ENCODE measurements at regions of chr4 and their contacts with region 1.

Region 1: GRCh38 chr4:160319221-160319867 is 1216.5 kb downstream of the RAPGEF2 start:
- DNase-seq: no peak
- H3K4me3 ChIP-seq: no peak overlapping the region
- CTCF ChIP-seq: no peak
- POLR2A ChIP-seq: no peak

Region 2: GRCh38 chr4:158644760-158645159 is 1674.6 kb before region 1 on chr4:
- intact Hi-C with region 1: loop called (anchors 5 kb)
- DNase-seq: no peak
- H3K4me3 ChIP-seq: no peak overlapping the region
- CTCF ChIP-seq: no peak
- POLR2A ChIP-seq: no peak

Region 3: GRCh38 chr4:159352609-159353008 is 966.7 kb before region 1 on chr4:
- intact Hi-C with region 1: no loop called
- DNase-seq: no peak
- H3K4me3 ChIP-seq: no peak overlapping the region
- CTCF ChIP-seq: no peak
- POLR2A ChIP-seq: no peak

Region 4: DNA sequence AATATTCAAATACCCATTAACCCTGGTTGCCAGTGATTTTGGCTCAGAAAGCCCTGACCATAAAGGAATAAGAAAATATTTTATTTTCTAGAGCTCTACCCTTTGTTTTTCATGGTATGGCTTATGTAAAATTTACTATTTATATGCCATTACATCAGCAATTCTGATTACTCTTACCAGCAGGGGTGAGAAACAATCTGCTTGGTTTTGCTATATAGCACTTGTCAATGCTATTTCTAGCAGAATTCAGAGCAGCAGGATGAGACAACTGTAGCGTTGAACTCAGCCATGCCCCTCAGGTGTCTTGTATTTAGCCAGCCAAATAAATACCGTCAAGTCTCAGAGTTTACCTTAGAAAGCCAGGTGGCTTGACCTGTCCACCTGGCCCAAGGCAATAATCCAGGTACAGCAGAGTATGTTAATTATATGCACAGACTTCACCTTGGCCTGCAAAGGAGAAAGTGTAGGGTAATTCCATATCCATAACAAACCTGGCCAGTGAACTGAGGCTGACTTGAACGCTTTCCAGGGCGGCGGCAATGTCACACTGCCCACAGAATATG is 87.0 kb after region 1 on chr4:
- intact Hi-C with region 1: no loop called
- DNase-seq: no peak
- H3K4me3 ChIP-seq: no peak overlapping the region
- CTCF ChIP-seq: no peak
- POLR2A ChIP-seq: no peak

Measured in lower leg skin (tissue), 4 donors.